ENCODE measurements at regions of chr19 and their contacts with region 1.

Region 1: GRCh38 chr19:37979547-37980082 is 72.6 kb downstream of the SIPA1L3 start:
- DNase-seq: peak; percentile 81
- H3K4me3 ChIP-seq: peak overlapping the region; percentile 56
- H3K27ac ChIP-seq: peak overlapping the region; percentile 100
- H3K4me1 ChIP-seq: peaks cover 90% of the 10 kb centered on the region
- CTCF ChIP-seq: no peak

Region 2: GRCh38 chr19:37817180-37817981 is 162.2 kb before region 1 on chr19:
- CTCF ChIA-PET with region 1: no interaction called
- POLR2A ChIA-PET with region 1: no interaction called
- intact Hi-C with region 1: no loop called
- DNase-seq: no peak
- H3K4me3 ChIP-seq: no peak overlapping the region
- H3K27ac ChIP-seq: no peak overlapping the region
- H3K4me1 ChIP-seq: no peaks in the 10 kb centered on the region
- CTCF ChIP-seq: no peak

Region 3: DNA sequence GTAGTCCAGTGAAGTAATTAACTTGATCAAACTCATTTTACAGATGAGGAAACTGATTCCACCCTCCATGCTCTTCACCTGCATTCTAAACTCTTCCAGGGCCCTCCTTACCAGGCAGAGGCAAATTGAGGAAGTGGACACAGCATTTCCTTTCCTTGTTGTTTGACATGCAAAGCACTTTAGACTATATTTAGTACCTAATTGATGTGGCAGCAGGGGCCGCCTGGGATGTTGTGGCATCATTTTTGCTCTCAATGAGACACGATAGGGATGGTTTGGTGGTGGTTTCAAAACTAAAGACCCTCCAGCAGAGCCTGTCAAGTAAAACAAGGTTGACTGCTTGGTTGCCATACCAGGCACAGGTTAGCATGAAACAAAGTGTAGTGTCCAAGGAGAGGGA is 64.7 kb before region 1 on chr19:
- CTCF ChIA-PET with region 1: interaction called, 6 read pairs
- POLR2A ChIA-PET with region 1: interaction called, 3 read pairs
- intact Hi-C with region 1: loop called (anchors 2 kb)
- DNase-seq: peak; percentile 88
- H3K4me3 ChIP-seq: peak overlapping the region; percentile 58
- H3K27ac ChIP-seq: peak overlapping the region; percentile 87
- H3K4me1 ChIP-seq: peaks cover 78% of the 10 kb centered on the region
- CTCF ChIP-seq: no peak

Region 4: GRCh38 chr19:38033658-38034498 is 54.3 kb after region 1 on chr19:
- CTCF ChIA-PET with region 1: no interaction called
- POLR2A ChIA-PET with region 1: no interaction called
- intact Hi-C with region 1: loop called (anchors 2 kb)
- DNase-seq: peak; percentile 95
- H3K4me3 ChIP-seq: peak overlapping the region; percentile 56
- H3K27ac ChIP-seq: peak overlapping the region; percentile 97
- H3K4me1 ChIP-seq: peaks cover 76% of the 10 kb centered on the region
- CTCF ChIP-seq: peak; percentile 61

Region 5: DNA sequence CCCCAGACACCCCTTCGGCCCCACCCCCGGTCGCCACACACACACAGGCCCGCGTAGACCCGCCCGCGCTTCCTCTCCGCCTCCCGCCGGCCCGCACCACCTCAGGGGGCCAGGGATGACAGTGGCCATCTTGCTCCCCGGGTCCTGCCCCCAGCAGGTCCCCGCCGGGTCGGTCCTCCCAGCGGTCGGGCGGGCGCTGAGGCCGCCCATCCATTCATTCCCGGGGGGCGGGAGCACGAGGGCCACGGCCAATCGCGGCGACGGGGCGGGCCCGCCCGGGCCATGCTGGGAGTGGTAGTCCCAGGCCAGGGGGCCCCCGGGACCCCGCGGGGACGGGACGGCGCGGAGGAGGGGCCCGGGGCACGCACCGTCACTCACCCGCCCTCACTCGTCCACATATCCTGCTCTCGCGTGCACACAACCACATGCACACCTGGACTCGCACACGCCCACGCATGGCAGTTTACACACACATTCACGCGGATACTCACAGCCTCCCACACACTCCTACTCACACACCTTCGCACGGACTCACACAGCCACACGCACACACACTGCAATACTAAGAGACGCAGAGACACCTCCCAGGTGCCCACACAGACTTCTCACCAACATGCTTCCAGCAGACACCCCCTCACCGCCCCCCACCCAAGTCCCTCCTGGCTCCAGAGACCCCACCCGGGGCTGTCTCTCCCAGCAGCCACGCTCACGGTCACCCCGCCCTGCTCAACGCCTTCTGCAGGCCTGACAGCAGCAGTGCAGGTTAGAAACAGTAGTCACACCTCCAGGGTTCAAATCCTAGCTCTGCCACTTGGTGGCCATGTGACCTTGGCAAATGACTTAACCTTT is 244.6 kb after region 1 on chr19 and contains the start of gene DPF1:
- CTCF ChIA-PET with region 1: no interaction called
- POLR2A ChIA-PET with region 1: no interaction called
- intact Hi-C with region 1: loop called (anchors 10 kb)
- DNase-seq: peak; percentile 88
- H3K4me3 ChIP-seq: peak within 1 kb of the TSS; percentile 76
- H3K27ac ChIP-seq: no peak within 1 kb of the TSS
- H3K4me1 ChIP-seq: peaks cover 26% of the 10 kb centered on the region
- CTCF ChIP-seq: peak; percentile 76
- total RNA-seq, gene DPF1: 6.5 and 7.6 TPM in 2 replicates